A673 (cell line): ENCODE measurements at regions of chr1 and their contacts with region 1.

Region 1: DNA sequence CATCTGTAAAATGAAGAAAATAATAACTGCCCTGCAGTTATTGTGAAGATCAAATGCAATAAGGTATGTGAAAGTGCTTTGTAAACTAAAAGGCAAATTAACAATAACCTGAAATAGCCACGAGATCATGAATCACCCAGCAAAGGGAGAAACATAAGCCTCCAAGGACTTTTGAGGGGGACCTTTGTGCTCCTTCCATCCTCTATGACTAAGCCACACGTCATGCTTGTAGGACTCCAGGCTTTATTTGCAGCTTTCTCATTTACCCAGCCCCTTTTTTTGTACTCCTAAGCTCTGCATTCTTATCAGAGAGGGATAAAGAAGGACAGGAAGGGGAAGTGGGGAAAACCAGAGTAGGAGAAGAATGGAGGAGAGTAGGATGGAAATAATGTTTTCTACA is 115.1 kb downstream of the PROX1 start:
- DNase-seq: no peak
- H3K4me3 ChIP-seq: no peak overlapping the region
- H3K27ac ChIP-seq: no peak overlapping the region
- H3K4me1 ChIP-seq: no peaks in the 10 kb centered on the region
- H3K27me3 ChIP-seq: peaks cover 61% of the 10 kb centered on the region
- CTCF ChIP-seq: no peak

Region 2: GRCh38 chr1:213135572-213135971 is 967.3 kb before region 1 on chr1:
- CTCF ChIA-PET with region 1: no interaction called
- POLR2A ChIA-PET with region 1: interaction called, 23 read pairs
- intact Hi-C with region 1: no loop called
- DNase-seq: no peak
- H3K4me3 ChIP-seq: no peak overlapping the region
- H3K27ac ChIP-seq: no peak overlapping the region
- H3K4me1 ChIP-seq: no peaks in the 10 kb centered on the region
- H3K27me3 ChIP-seq: no peaks in the 10 kb centered on the region
- CTCF ChIP-seq: no peak; the same call in 1 of the 2 replicates

Region 3: GRCh38 chr1:214566158-214567104 is 463.5 kb after region 1 on chr1:
- CTCF ChIA-PET with region 1: no interaction called
- POLR2A ChIA-PET with region 1: no interaction called
- intact Hi-C with region 1: no loop called
- DNase-seq: no peak
- H3K4me3 ChIP-seq: no peak overlapping the region
- H3K27ac ChIP-seq: no peak overlapping the region
- H3K4me1 ChIP-seq: peaks cover 16% of the 10 kb centered on the region
- H3K27me3 ChIP-seq: no peaks in the 10 kb centered on the region
- CTCF ChIP-seq: no peak